Naive thymus-derived CD4-positive, alpha-beta T cell (primary cell): ENCODE measurements at regions of chr10 and their contacts with region 1.

Region 1: GRCh38 chr10:14543046-14543903 is 212.6 kb upstream of the FRMD4A start:
- DNase-seq: peak in 7 of 9 donors; percentile 60 to 81 (median 73)
- ATAC-seq: peak; percentile 86
- H3K4me3 ChIP-seq: peak overlapping the region; percentile 28
- H3K4me3 Mint-ChIP-seq: peak overlapping the region; percentile 46 to 82 (median 76)
- H3K27ac ChIP-seq: peak overlapping the region; percentile 72
- H3K27ac Mint-ChIP-seq: peak overlapping the region; percentile 73 to 96 (median 84)
- H3K4me1 ChIP-seq: peaks cover 23 to 42% of the 10 kb centered on the region in 2 donors
- H3K4me1 Mint-ChIP-seq: peaks cover 57 to 97% (median 94%) of the 10 kb centered on the region in 7 donors
- H3K27me3 ChIP-seq: no peaks in the 10 kb centered on the region
- H3K27me3 Mint-ChIP-seq: no peaks in the 10 kb centered on the region

Region 2: GRCh38 chr10:14200698-14201544 is 342.4 kb before region 1 on chr10:
- CTCF ChIA-PET with region 1: interaction called, 6 read pairs
- POLR2A ChIA-PET with region 1: no interaction called
- intact Hi-C with region 1: loop called (anchors 1 to 2 kb)
- DNase-seq: no peak
- ATAC-seq: no peak
- H3K4me3 ChIP-seq: no peak overlapping the region
- H3K4me3 Mint-ChIP-seq: no peak overlapping the region
- H3K27ac ChIP-seq: no peak overlapping the region
- H3K27ac Mint-ChIP-seq: peak overlapping the region in 1 of 9 donors; percentile 74
- H3K4me1 ChIP-seq: no peaks in the 10 kb centered on the region
- H3K4me1 Mint-ChIP-seq: peaks cover 0 to 1% (median 0%) of the 10 kb centered on the region in 7 donors
- H3K27me3 ChIP-seq: no peaks in the 10 kb centered on the region
- H3K27me3 Mint-ChIP-seq: peaks cover 17 to 22% (median 18%) of the 10 kb centered on the region in 5 donors

Region 3: DNA sequence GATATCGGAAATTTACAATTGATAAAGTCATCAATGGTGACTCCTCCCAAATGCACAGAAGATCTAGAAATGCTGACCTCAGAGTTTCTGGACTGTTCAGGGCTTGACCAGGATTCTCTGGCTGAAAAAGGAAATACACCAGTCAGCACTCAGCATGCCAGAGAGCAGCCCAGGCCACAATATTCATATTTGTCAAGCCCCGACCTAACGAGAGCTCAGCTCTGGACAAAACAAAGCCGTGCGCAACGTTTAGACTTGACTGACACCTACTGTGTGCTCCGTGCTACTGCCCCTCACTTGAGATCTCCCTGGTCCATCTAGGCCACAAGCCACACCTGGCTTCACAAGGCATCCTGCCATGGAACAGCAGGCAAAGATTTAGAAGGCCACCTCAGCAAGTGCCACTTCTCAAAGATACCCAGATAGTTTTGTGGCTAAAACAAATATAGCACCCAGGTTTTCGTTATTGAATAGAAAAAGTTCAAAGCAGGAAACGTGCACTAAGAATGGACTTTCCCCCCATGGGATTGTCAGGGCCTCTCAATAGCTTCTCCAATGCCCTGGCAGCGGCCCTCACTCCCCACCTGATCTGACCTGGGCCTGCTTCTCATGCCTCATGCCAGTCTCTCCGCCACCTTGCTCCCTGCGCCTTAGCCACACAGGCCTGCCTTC is 13.1 kb after region 1 on chr10:
- CTCF ChIA-PET with region 1: interaction called, 9 read pairs
- POLR2A ChIA-PET with region 1: interaction called, 17 read pairs
- intact Hi-C with region 1: loop called in 1 of 2 experiments (anchors 2 kb)
- DNase-seq: no peak
- ATAC-seq: peak; percentile 47
- H3K4me3 ChIP-seq: no peak overlapping the region
- H3K4me3 Mint-ChIP-seq: peak overlapping the region; percentile 9 to 86 (median 73)
- H3K27ac ChIP-seq: peak overlapping the region; percentile 37
- H3K27ac Mint-ChIP-seq: peak overlapping the region; percentile 52 to 97 (median 93)
- H3K4me1 ChIP-seq: peaks cover 90 to 94% of the 10 kb centered on the region in 2 donors
- H3K4me1 Mint-ChIP-seq: peaks cover 84 to 100% (median 92%) of the 10 kb centered on the region in 7 donors
- H3K27me3 ChIP-seq: no peaks in the 10 kb centered on the region
- H3K27me3 Mint-ChIP-seq: no peaks in the 10 kb centered on the region

Region 4: GRCh38 chr10:14571866-14572507 is 28.7 kb after region 1 on chr10:
- CTCF ChIA-PET with region 1: interaction called, 7 read pairs
- POLR2A ChIA-PET with region 1: interaction called, 13 read pairs
- intact Hi-C with region 1: loop called in 1 of 2 experiments (anchors 1 kb)
- DNase-seq: peak in 8 of 9 donors; percentile 47 to 94 (median 90)
- ATAC-seq: peak; percentile 80
- H3K4me3 ChIP-seq: peak overlapping the region; percentile 67
- H3K4me3 Mint-ChIP-seq: peak overlapping the region; percentile 86 to 98 (median 96)
- H3K27ac ChIP-seq: peak overlapping the region; percentile 87
- H3K27ac Mint-ChIP-seq: peak overlapping the region; percentile 93 to 100 (median 99)
- H3K4me1 ChIP-seq: peaks cover 40 to 53% of the 10 kb centered on the region in 2 donors
- H3K4me1 Mint-ChIP-seq: peaks cover 42 to 88% (median 79%) of the 10 kb centered on the region in 7 donors
- H3K27me3 ChIP-seq: no peaks in the 10 kb centered on the region
- H3K27me3 Mint-ChIP-seq: no peaks in the 10 kb centered on the region

Region 5: DNA sequence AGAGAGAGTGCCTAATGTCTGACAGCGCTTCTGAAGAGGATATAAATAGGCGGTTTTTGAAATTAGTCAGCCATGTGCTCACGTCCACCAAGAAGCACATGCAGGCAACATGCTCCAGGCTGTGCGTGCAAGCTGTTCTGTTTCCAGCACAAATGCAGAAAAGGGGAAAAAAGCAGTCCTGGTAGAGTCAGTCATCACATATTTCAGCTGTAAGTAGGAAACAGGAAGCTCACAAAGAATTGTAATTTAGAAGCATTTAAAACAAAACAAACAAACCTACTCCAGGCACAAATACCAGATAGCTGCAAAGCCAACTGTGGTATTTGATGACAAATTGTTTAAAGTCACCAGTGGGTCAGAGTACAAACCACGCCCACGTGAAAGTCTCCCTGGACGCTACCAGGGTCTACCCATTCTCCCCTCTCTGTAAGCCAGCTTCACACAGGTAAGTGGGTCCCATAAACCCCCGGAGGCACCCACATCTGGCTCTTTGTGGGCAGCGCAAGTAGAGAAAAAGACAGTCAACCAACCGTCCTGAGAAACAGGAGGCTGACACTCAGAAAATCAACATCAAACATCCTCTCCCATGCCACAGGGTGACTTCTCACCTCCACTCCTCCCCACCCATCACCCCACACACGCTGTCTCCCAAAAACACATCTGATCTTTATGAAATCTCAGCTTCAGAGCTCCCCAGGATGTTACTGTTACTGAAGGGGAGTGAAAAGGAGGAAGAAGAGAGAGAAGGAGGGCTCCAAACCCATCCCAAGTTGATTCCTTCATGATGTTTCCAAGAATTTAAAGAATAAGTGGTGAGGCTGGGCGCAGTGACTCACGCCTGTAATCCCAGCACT is 45.0 kb after region 1 on chr10:
- CTCF ChIA-PET with region 1: interaction called, 21 read pairs
- POLR2A ChIA-PET with region 1: interaction called, 13 read pairs
- intact Hi-C with region 1: loop called in 1 of 2 experiments (anchors 2 kb)
- DNase-seq: peak in 6 of 9 donors; percentile 24 to 60 (median 44)
- ATAC-seq: peak; percentile 20
- H3K4me3 ChIP-seq: peak overlapping the region; percentile 31
- H3K4me3 Mint-ChIP-seq: peak overlapping the region; percentile 76 to 88 (median 84)
- H3K27ac ChIP-seq: peak overlapping the region; percentile 83
- H3K27ac Mint-ChIP-seq: peak overlapping the region; percentile 96 to 100 (median 99)
- H3K4me1 ChIP-seq: peaks cover 73 to 76% of the 10 kb centered on the region in 2 donors
- H3K4me1 Mint-ChIP-seq: peaks cover 52 to 94% (median 93%) of the 10 kb centered on the region in 7 donors
- H3K27me3 ChIP-seq: no peaks in the 10 kb centered on the region
- H3K27me3 Mint-ChIP-seq: no peaks in the 10 kb centered on the region

Region 6: DNA sequence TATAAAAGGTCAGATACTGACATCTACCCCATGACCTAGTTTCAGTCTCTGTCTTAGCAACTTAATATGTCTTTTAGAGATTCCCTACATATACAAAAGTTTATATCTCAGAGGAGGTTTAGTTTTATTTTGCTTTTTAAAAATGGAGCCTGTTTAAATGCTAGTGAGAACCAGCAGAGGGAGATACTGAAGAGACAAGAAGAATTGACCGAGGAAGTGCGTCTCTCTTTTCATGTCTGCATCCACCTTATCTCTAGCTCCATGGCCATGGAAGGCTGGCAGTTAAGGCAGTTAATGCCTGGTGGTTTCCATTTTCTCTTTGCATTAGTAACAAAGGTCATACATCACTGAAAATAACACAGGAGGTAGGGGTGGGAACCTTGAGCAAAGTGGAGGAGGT is 346.0 kb after region 1 on chr10:
- CTCF ChIA-PET with region 1: no interaction called
- POLR2A ChIA-PET with region 1: no interaction called
- intact Hi-C with region 1: no loop called
- DNase-seq: peak in 3 of 9 donors; percentile 16 to 23 (median 17)
- ATAC-seq: peak; percentile 47
- H3K4me3 ChIP-seq: no peak overlapping the region
- H3K4me3 Mint-ChIP-seq: no peak overlapping the region
- H3K27ac ChIP-seq: no peak overlapping the region
- H3K27ac Mint-ChIP-seq: peak overlapping the region in 2 of 9 donors; percentile 41 to 64
- H3K4me1 ChIP-seq: peaks cover 0 to under 1% of the 10 kb centered on the region in 2 donors
- H3K4me1 Mint-ChIP-seq: peaks cover 3 to 10% (median 6%) of the 10 kb centered on the region in 7 donors
- H3K27me3 ChIP-seq: no peaks in the 10 kb centered on the region
- H3K27me3 Mint-ChIP-seq: no peaks in the 10 kb centered on the region